GM12878 (cell line): ENCODE measurements at regions of chr2 and their contacts with region 1.

Region 1: DNA sequence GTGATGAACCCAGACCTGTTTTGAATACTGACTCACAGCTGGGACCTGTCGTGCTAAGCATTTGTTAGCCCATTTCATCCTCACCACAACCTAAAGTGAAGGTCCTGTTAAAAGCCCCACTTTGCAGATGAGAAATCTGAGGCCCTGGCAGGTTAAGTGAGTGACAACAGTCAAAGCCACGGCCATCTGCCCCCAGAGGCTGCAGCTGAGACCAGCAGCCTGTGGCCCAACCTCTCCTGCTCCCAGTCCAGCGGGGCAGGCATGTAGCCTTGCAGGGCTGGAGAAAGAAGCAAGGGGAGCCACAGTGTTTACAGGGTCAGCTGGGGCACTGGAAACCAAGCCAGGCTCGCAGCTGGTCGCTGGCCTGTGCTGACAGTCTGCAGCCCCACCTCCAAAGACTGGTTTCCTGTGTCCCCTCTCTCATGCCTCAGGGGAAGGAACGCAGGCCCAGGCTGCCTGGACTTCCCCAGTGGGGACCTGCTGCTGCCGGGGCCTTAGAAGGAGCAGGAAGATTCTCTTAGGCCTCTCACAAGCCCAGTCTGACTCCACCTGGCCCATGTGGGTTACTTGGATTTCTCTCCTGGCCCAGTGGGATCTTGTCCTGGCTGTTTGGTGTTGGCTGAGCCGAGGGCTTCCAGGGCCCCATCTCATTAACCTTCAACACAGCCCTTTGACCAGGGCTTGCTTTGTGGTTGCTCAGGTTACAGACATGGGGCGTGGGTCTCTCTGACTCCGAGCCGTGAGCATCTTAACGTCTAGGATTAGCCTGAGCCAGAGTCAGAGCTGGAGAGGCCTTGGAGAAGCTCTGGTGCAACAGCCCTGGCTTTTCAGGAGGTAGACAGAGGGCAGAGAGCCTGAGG is 1.7 kb downstream of the INPP5D start:
- DNase-seq: no peak
- ATAC-seq: peak; percentile 63
- H3K4me3 ChIP-seq: peak overlapping the region; percentile 94
- H3K27ac ChIP-seq: peak overlapping the region; percentile 93
- H3K4me1 ChIP-seq: peaks cover 42% of the 10 kb centered on the region
- H3K27me3 ChIP-seq: no peaks in the 10 kb centered on the region
- CTCF ChIP-seq: peak; percentile 44 to 69 (median 53)
- EP300 ChIP-seq: no peak
- POLR2A ChIP-seq: peak; percentile 47
- RAD21 ChIP-seq: 0 out of 2 replicates have a peak, but pooled peaks have one; percentile 18

Region 2: GRCh38 chr2:232869138-232870017 is 192.4 kb before region 1 on chr2:
- CTCF ChIA-PET with region 1: no interaction called
- POLR2A ChIA-PET with region 1: no interaction called
- RAD21 ChIA-PET with region 1: no interaction called
- SMC1A ChIA-PET with region 1: no interaction called
- in situ Hi-C with region 1: no loop called
- intact Hi-C with region 1: no loop called
- DNase-seq: no peak
- ATAC-seq: no peak
- H3K4me3 ChIP-seq: no peak overlapping the region
- H3K27ac ChIP-seq: no peak overlapping the region
- H3K4me1 ChIP-seq: no peaks in the 10 kb centered on the region
- H3K27me3 ChIP-seq: no peaks in the 10 kb centered on the region
- CTCF ChIP-seq: no peak
- EP300 ChIP-seq: no peak
- POLR2A ChIP-seq: no peak
- RAD21 ChIP-seq: no peak

Region 3: DNA sequence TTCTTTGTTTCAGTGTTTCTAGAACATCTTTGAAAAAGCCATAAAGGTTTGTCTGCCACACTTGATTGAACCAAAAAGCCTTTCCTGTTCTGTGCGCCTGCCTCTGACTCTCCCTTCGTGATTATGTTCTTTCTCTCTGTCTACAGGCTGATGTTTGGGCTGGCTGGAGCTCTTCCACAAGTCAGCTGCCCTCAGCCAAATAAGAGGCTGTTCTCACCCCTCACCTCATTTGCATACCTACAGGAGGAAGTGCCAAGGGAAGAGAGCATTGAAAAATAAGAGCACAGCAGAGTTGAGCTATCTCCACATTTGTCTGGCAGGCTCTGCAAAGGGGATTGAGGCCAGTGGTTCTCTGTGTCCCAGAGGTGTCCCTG is 14.1 kb after region 1 on chr2:
- CTCF ChIA-PET with region 1: interaction called, 68 read pairs
- POLR2A ChIA-PET with region 1: interaction called, 271 read pairs
- RAD21 ChIA-PET with region 1: interaction called, 361 read pairs
- SMC1A ChIA-PET with region 1: interaction called, 351 read pairs
- in situ Hi-C with region 1: no loop called
- intact Hi-C with region 1: no loop called
- DNase-seq: peak; percentile 82
- ATAC-seq: peak; percentile 68
- H3K4me3 ChIP-seq: peak overlapping the region; percentile 30; the same call in 1 of the 2 replicates
- H3K27ac ChIP-seq: peak overlapping the region; percentile 89
- H3K4me1 ChIP-seq: peaks cover 87% of the 10 kb centered on the region
- H3K27me3 ChIP-seq: no peaks in the 10 kb centered on the region
- CTCF ChIP-seq: no peak
- EP300 ChIP-seq: 0 out of 4 replicates have a peak, but pooled peaks of 1 of the 2 experiments have one; percentile 33
- POLR2A ChIP-seq: 0 out of 2 replicates have a peak, but pooled peaks have one; percentile 17
- RAD21 ChIP-seq: no peak

Region 4: GRCh38 chr2:233092432-233093165 is 30.8 kb after region 1 on chr2:
- CTCF ChIA-PET with region 1: interaction called, 16 read pairs
- POLR2A ChIA-PET with region 1: interaction called, 7 read pairs
- RAD21 ChIA-PET with region 1: interaction called, 361 read pairs
- SMC1A ChIA-PET with region 1: interaction called, 351 read pairs
- in situ Hi-C with region 1: no loop called
- intact Hi-C with region 1: no loop called
- DNase-seq: no peak
- ATAC-seq: peak; percentile 76
- H3K4me3 ChIP-seq: peak overlapping the region; percentile 27; the same call in 1 of the 2 replicates
- H3K27ac ChIP-seq: peak overlapping the region; percentile 83
- H3K4me1 ChIP-seq: peaks cover 58% of the 10 kb centered on the region
- H3K27me3 ChIP-seq: no peaks in the 10 kb centered on the region
- CTCF ChIP-seq: no peak
- EP300 ChIP-seq: no peak
- POLR2A ChIP-seq: no peak
- RAD21 ChIP-seq: no peak

Region 5: DNA sequence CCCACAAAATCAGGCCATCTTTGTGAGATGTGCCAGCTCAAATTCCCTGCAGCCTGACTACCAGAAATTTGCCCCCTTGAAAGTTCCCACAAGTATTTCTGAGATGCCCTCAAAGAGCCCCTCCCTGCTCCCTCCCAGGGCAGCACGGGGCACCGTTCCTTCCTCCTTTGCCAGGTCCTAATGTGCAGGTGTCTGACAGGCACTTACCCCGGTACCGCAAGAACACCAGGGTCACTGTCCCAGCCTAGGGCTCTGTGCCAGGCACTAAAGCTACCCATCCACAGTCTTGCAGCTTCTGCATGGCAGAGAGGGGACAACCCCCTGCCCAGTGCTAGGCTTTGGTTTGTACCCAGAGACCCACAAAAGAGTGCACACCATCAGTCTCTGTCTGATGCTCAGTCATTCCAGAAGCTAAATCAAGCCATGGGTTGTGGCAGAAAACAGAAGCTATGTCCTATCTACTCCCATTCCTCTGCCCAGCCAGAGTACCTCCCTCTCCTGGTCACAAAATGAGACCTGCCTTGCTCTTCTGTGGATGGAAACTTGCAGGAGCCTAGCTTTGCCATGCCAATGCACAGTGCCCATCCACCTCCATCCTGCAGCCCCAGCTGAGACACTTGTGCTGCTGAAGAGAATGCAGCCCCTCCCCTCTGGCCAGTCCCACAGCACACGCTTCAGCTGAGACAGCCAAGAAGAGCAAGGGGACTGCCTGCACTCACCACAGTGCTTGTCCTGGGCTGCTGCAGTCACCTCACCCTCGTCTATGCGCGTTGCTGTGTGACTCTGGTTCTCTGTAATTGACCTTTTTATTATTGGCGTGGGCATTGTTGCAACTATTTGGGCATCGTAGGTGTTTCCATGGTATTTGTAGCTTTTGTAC is 47.0 kb after region 1 on chr2:
- CTCF ChIA-PET with region 1: interaction called, 12 read pairs
- POLR2A ChIA-PET with region 1: interaction called, 70 read pairs
- RAD21 ChIA-PET with region 1: interaction called, 160 read pairs
- SMC1A ChIA-PET with region 1: interaction called, 65 read pairs
- in situ Hi-C with region 1: no loop called
- intact Hi-C with region 1: no loop called
- DNase-seq: no peak
- ATAC-seq: peak; percentile 81
- H3K4me3 ChIP-seq: 0 out of 2 replicates have a peak overlapping the region, but pooled peaks have one; percentile 30
- H3K27ac ChIP-seq: peak overlapping the region; percentile 43
- H3K4me1 ChIP-seq: peaks cover 34% of the 10 kb centered on the region
- H3K27me3 ChIP-seq: no peaks in the 10 kb centered on the region
- CTCF ChIP-seq: no peak; a peak in 1 of 6 replicates
- EP300 ChIP-seq: no peak
- POLR2A ChIP-seq: peak; percentile 26; the same call in 1 of the 2 replicates
- RAD21 ChIP-seq: no peak

Region 6: DNA sequence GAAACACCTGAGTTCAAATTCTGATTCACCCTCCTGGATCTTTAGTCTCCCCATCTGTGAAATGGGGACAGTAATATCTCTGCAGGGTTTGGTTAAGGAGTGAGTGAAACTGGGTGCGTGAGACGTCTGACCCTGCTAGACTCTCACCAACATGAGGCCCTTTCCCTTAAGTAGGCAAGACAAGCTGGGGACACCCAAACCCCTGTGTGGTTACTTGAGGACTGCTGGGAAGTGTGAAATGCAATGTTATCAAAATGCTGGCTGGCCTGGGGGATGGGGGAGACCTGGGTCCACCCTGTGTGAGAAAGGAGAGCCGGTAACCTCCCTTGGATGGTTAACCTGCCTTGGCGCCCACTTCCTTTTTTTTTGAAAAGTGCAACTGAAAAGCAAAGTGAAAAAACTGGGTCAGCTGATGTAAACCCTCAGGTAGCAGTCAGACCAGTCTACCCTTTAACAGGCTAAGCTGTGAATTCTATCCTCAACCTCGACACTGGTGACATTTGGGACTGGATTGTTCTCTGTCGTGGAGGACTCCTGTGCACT is 80.6 kb after region 1 on chr2:
- CTCF ChIA-PET with region 1: interaction called, 14 read pairs
- POLR2A ChIA-PET with region 1: interaction called, 7 read pairs
- RAD21 ChIA-PET with region 1: interaction called, 11 read pairs
- SMC1A ChIA-PET with region 1: interaction called, 14 read pairs
- in situ Hi-C with region 1: no loop called
- intact Hi-C with region 1: no loop called
- DNase-seq: peak; percentile 74
- ATAC-seq: peak; percentile 93
- H3K4me3 ChIP-seq: no peak overlapping the region; the same call in 1 of the 2 replicates
- H3K27ac ChIP-seq: peak overlapping the region; percentile 74
- H3K4me1 ChIP-seq: peaks cover 19% of the 10 kb centered on the region
- H3K27me3 ChIP-seq: no peaks in the 10 kb centered on the region
- CTCF ChIP-seq: no peak
- EP300 ChIP-seq: peak; percentile 34 to 55; a peak in 2 of 4 replicates
- POLR2A ChIP-seq: peak; percentile 60; the same call in 1 of the 2 replicates
- RAD21 ChIP-seq: 0 out of 2 replicates have a peak, but pooled peaks have one; percentile 24

Region 7: GRCh38 chr2:233251306-233252116 is 189.7 kb after region 1 on chr2 and contains the start of gene ATG16L1:
- CTCF ChIA-PET with region 1: interaction called, 27 read pairs
- POLR2A ChIA-PET with region 1: interaction called, 12 read pairs
- RAD21 ChIA-PET with region 1: interaction called, 25 read pairs
- SMC1A ChIA-PET with region 1: interaction called, 29 read pairs
- in situ Hi-C with region 1: no loop called
- intact Hi-C with region 1: loop called (anchors 1 kb)
- DNase-seq: peak; percentile 73
- ATAC-seq: peak; percentile 96
- H3K4me3 ChIP-seq: peak within 1 kb of the TSS; percentile 99
- H3K27ac ChIP-seq: peak within 1 kb of the TSS; percentile 95
- H3K4me1 ChIP-seq: peaks cover 4% of the 10 kb centered on the region; the same call in 1 of the 2 replicates
- H3K27me3 ChIP-seq: no peaks in the 10 kb centered on the region
- CTCF ChIP-seq: peak; percentile 93 to 99 (median 98); a peak in 5 of 6 replicates
- EP300 ChIP-seq: no peak
- POLR2A ChIP-seq: peak; percentile 97
- RAD21 ChIP-seq: peak; percentile 98
- polyA plus RNA-seq, gene ATG16L1: 5.2 to 7.8 TPM